Sciatic nerve (tissue), 2 donors: ENCODE measurements at regions of chr10 and their contacts with region 1.

Region 1: DNA sequence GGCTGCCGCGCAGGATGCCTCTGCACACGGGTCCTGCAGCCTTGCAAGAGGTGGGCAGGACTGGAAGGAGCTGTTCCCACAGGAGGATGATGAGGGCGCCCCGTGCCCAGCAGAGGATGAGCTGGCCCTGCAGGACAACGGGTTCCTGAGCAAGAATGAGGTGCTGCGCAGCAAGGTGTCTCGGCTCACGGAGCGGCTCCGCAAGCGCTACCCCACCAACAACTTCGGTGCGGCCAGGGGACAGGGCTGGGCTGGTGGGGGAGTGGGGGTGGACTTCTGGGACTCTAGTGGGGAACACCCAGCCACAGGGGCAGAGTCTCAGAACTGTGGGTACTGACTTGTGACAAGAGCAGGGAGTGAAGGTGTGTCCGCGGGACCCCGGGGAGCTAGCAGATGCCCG is 16.0 kb downstream of the ZFYVE27 start:
- DNase-seq: no peak
- ATAC-seq: no peak

Region 2: GRCh38 chr10:96225119-96225518 is 1527.8 kb before region 1 on chr10:
- intact Hi-C with region 1: no loop called
- DNase-seq: no peak
- ATAC-seq: no peak

Region 3: GRCh38 chr10:97024181-97025073 is 728.5 kb before region 1 on chr10:
- intact Hi-C with region 1: loop called (anchors 5 kb)
- DNase-seq: peak; percentile 49
- ATAC-seq: no peak